CD4-positive, alpha-beta memory T cell (primary cell): ENCODE measurements at regions of chr6 and their contacts with region 1.

Region 1: DNA sequence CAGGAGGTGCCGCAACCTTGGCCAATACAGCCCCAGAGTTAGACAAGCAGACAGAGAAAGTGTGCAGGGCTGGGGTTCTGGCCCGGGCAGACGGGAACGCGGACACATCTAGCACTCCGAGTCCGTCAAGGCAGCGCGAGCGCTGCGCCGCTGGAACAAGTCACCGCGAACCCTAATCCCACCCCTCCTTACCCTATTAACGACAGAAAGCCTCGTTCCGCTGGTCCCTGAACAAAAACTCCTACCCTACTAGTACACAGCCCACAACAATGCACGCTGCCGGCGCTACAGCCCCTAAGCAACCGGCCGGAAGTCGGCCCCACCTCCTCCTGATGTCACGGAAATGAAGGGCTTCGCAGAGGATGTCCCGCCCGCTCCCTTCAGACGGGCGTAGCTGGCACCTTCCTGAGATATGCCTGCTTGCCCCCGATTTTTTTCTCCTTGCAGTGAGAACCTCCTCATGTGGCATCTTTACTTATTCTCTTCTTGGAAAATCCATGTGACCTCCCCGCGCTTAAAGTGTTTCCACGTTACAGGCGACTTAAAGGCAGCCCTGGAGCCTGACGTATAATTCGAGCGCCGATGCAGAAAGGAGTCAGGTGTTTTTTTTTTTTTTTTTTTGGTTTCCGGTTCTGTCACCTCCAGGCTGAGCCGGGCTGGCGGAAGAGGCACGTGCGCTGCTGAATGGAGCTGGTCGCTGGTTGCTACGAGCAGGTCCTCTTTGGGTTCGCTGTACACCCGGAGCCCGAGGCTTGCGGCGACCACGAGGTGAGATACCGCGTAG is at the starts of genes C6orf52 and PAK1IP1:
- DNase-seq: peak; percentile 96 to 97 (median 97)
- H3K4me3 ChIP-seq: peak within 1 kb of the TSS; percentile 45 to 88
- H3K4me3 Mint-ChIP-seq: peak within 1 kb of the TSS; percentile 93 to 100 (median 98)
- H3K27ac ChIP-seq: peak within 1 kb of the TSS; percentile 92
- H3K27ac Mint-ChIP-seq: peak within 1 kb of the TSS; percentile 100
- H3K4me1 ChIP-seq: peaks cover 34% of the 10 kb centered on the region
- H3K4me1 Mint-ChIP-seq: peaks cover 25 to 49% (median 34%) of the 10 kb centered on the region in 4 donors
- H3K27me3 ChIP-seq: no peaks in the 10 kb centered on the region
- H3K27me3 Mint-ChIP-seq: peaks cover 2 to 6% of the 10 kb centered on the region in 2 donors
- total RNA-seq, gene C6orf52: 1.2 to 1.5 TPM
- total RNA-seq, gene PAK1IP1: 7.2 to 7.4 TPM

Region 2: GRCh38 chr6:10112871-10113549 is 581.5 kb before region 1 on chr6:
- CTCF ChIA-PET with region 1: no interaction called
- POLR2A ChIA-PET with region 1: no interaction called
- intact Hi-C with region 1: no loop called
- DNase-seq: no peak
- H3K4me3 ChIP-seq: no peak overlapping the region
- H3K4me3 Mint-ChIP-seq: no peak overlapping the region
- H3K27ac ChIP-seq: no peak overlapping the region
- H3K27ac Mint-ChIP-seq: no peak overlapping the region
- H3K4me1 ChIP-seq: no peaks in the 10 kb centered on the region
- H3K4me1 Mint-ChIP-seq: no peaks in the 10 kb centered on the region
- H3K27me3 ChIP-seq: no peaks in the 10 kb centered on the region
- H3K27me3 Mint-ChIP-seq: peaks cover 3 to 7% of the 10 kb centered on the region in 2 donors

Region 3: GRCh38 chr6:10404107-10404798 is 290.2 kb before region 1 on chr6:
- CTCF ChIA-PET with region 1: no interaction called
- POLR2A ChIA-PET with region 1: no interaction called
- intact Hi-C with region 1: loop called (anchors 10 kb)
- DNase-seq: peak; percentile 85 to 90 (median 87)
- H3K4me3 ChIP-seq: peak overlapping the region; percentile 51 to 64
- H3K4me3 Mint-ChIP-seq: peak overlapping the region; percentile 75 to 86 (median 84)
- H3K27ac ChIP-seq: peak overlapping the region; percentile 25
- H3K27ac Mint-ChIP-seq: peak overlapping the region; percentile 55 to 89 (median 76)
- H3K4me1 ChIP-seq: peaks cover 17% of the 10 kb centered on the region
- H3K4me1 Mint-ChIP-seq: peaks cover 9 to 19% (median 13%) of the 10 kb centered on the region in 4 donors
- H3K27me3 ChIP-seq: peaks cover 10% of the 10 kb centered on the region
- H3K27me3 Mint-ChIP-seq: peaks cover 28 to 31% of the 10 kb centered on the region in 2 donors

Region 4: DNA sequence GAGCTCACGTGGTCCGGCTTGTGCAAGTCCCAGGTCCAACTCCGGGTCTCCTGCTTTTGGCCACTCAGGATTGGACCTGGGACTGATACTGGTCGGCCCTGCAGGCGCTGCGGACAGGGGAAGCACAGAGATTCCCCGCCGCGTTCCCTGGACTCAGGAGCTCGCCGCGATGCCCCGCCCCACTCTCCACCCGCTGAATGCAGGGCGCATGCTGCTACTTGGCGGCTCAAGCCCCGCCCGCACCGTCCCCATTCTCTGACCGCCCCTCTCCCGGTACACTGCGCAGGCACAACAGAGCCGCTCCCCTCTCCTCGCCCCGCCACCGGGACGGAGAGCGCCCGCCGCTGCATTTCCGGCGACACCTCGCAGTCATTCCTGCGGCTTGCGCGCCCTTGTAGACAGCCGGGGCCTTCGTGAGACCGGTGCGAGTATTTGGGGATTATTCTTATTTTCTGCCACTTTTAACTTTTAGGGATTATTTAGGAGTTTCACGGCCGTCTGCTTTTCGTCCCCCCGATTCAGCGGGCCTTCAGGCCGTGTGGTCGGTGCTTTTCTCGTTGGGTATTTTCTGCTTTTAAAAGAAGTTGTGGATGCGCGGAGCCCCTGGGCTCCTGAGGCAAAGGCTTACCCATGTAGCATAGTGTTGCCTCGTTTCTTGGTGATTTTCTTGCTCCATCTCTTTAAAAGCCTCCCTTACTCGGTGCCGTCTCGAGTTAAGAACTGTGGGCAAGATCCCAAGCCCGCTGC is 28.5 kb after region 1 on chr6 and contains the start of gene TMEM14C:
- CTCF ChIA-PET with region 1: interaction called, 5 read pairs
- POLR2A ChIA-PET with region 1: interaction called, 103 read pairs
- intact Hi-C with region 1: loop called (anchors 1 kb)
- DNase-seq: peak; percentile 61 to 80 (median 68)
- H3K4me3 ChIP-seq: peak within 1 kb of the TSS; percentile 24 to 57
- H3K4me3 Mint-ChIP-seq: peak within 1 kb of the TSS; percentile 93 to 97 (median 96)
- H3K27ac ChIP-seq: peak within 1 kb of the TSS; percentile 62
- H3K27ac Mint-ChIP-seq: peak within 1 kb of the TSS; percentile 84 to 96 (median 93)
- H3K4me1 ChIP-seq: peaks cover 48% of the 10 kb centered on the region
- H3K4me1 Mint-ChIP-seq: peaks cover 34 to 64% (median 48%) of the 10 kb centered on the region in 4 donors
- H3K27me3 ChIP-seq: no peaks in the 10 kb centered on the region
- H3K27me3 Mint-ChIP-seq: no peaks in the 10 kb centered on the region
- total RNA-seq, gene TMEM14C: 34.1 to 37.3 TPM

Region 5: GRCh38 chr6:10800829-10801535 is 106.5 kb after region 1 on chr6:
- CTCF ChIA-PET with region 1: no interaction called
- POLR2A ChIA-PET with region 1: no interaction called
- intact Hi-C with region 1: loop called (anchors 10 kb)
- DNase-seq: peak in 4 of 5 donors; percentile 43 to 60 (median 54)
- H3K4me3 ChIP-seq: no peak overlapping the region
- H3K4me3 Mint-ChIP-seq: no peak overlapping the region
- H3K27ac ChIP-seq: no peak overlapping the region
- H3K27ac Mint-ChIP-seq: peak overlapping the region in 1 of 7 donors; percentile 57
- H3K4me1 ChIP-seq: no peaks in the 10 kb centered on the region
- H3K4me1 Mint-ChIP-seq: no peaks in the 10 kb centered on the region
- H3K27me3 ChIP-seq: no peaks in the 10 kb centered on the region
- H3K27me3 Mint-ChIP-seq: no peaks in the 10 kb centered on the region

Region 6: GRCh38 chr6:11537229-11538051 is 842.9 kb after region 1 on chr6 and contains the start of gene TMEM170B:
- CTCF ChIA-PET with region 1: no interaction called
- POLR2A ChIA-PET with region 1: no interaction called
- intact Hi-C with region 1: loop called (anchors 1 kb)
- DNase-seq: peak; percentile 94 to 98 (median 97)
- H3K4me3 ChIP-seq: peak within 1 kb of the TSS; percentile 60 to 77
- H3K4me3 Mint-ChIP-seq: peak within 1 kb of the TSS; percentile 86 to 92 (median 90)
- H3K27ac ChIP-seq: peak within 1 kb of the TSS; percentile 54
- H3K27ac Mint-ChIP-seq: peak within 1 kb of the TSS; percentile 72 to 94 (median 92)
- H3K4me1 ChIP-seq: peaks cover 11% of the 10 kb centered on the region
- H3K4me1 Mint-ChIP-seq: peaks cover 7 to 24% (median 9%) of the 10 kb centered on the region in 4 donors
- H3K27me3 ChIP-seq: no peaks in the 10 kb centered on the region
- H3K27me3 Mint-ChIP-seq: peaks cover 2 to 4% of the 10 kb centered on the region in 2 donors
- total RNA-seq, gene TMEM170B: 1.9 to 2.1 TPM